ENCODE measurements at regions of chr12 and their contacts with region 1.

Region 1: GRCh38 chr12:6470375-6471163 is at the start of gene VAMP1:
- DNase-seq: peak; percentile 96
- H3K4me3 ChIP-seq: peak within 1 kb of the TSS; percentile 86
- H3K27ac ChIP-seq: peak within 1 kb of the TSS; percentile 62
- H3K4me1 ChIP-seq: peaks cover 32% of the 10 kb centered on the region
- CTCF ChIP-seq: no peak; the same call in 1 of the 2 replicates
- total RNA-seq, gene VAMP1: 82.7 and 86.0 TPM in 2 replicates

Region 2: DNA sequence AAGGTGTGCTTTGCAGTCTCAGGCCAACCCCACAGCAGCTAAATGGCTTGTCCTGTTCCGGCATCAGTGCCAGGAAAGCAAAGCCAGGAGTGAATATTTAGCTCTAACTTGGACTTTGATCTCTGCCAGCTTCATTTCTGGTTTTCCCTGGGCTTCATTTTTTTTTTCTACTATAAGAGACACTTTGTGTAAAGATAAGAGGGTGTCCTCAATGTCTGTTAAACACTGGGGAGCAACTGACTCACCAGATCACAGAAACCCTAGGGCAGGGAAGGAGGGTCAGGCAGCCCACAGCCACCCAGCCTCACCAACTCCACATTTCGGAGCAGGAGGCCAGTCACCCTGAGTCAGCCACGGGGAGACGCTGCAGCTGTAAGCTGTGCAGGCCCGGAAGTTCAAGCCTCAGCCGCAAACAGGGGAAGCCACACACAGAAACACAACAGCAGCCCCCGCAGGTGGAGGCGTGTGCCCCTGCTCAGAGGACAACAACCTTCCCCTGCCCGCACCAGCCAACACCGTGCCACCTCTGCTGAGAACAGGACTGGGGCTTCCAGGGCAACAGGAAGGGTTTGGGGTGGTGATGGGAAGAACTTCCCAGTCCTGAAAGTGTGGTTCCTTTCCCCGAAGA is 135.0 kb before region 1 on chr12:
- CTCF ChIA-PET with region 1: interaction called, 4 read pairs
- POLR2A ChIA-PET with region 1: interaction called, 3 read pairs
- intact Hi-C with region 1: loop called (anchors 5 kb)
- DNase-seq: peak; percentile 90
- H3K4me3 ChIP-seq: peak overlapping the region; percentile 53
- H3K27ac ChIP-seq: peak overlapping the region; percentile 80
- H3K4me1 ChIP-seq: peaks cover 72% of the 10 kb centered on the region
- CTCF ChIP-seq: peak; percentile 89

Region 3: GRCh38 chr12:6430124-6430989 is 40.2 kb before region 1 on chr12:
- CTCF ChIA-PET with region 1: interaction called, 34 read pairs
- POLR2A ChIA-PET with region 1: interaction called, 27 read pairs
- intact Hi-C with region 1: loop called (anchors 1 kb)
- DNase-seq: peak; percentile 41
- H3K4me3 ChIP-seq: peak overlapping the region; percentile 6
- H3K27ac ChIP-seq: peak overlapping the region; percentile 68
- H3K4me1 ChIP-seq: peaks cover 90% of the 10 kb centered on the region
- CTCF ChIP-seq: no peak

Region 4: GRCh38 chr12:6451348-6452244 is 19.0 kb before region 1 on chr12 and contains the start of gene TAPBPL:
- CTCF ChIA-PET with region 1: no interaction called
- POLR2A ChIA-PET with region 1: interaction called, 18 read pairs
- intact Hi-C with region 1: no loop called
- DNase-seq: peak; percentile 89
- H3K4me3 ChIP-seq: peak within 1 kb of the TSS; percentile 74
- H3K27ac ChIP-seq: peak within 1 kb of the TSS; percentile 81
- H3K4me1 ChIP-seq: peaks cover 56% of the 10 kb centered on the region
- CTCF ChIP-seq: no peak
- total RNA-seq, gene TAPBPL: 18.4 and 23.7 TPM in 2 replicates

Region 5: GRCh38 chr12:6533923-6534694 is 63.5 kb after region 1 on chr12 and contains the start of gene GAPDH:
- CTCF ChIA-PET with region 1: no interaction called
- POLR2A ChIA-PET with region 1: interaction called, 7 read pairs
- intact Hi-C with region 1: loop called (anchors 2 kb)
- DNase-seq: peak; percentile 99
- H3K4me3 ChIP-seq: peak within 1 kb of the TSS; percentile 93
- H3K27ac ChIP-seq: peak within 1 kb of the TSS; percentile 95
- H3K4me1 ChIP-seq: peaks cover 47% of the 10 kb centered on the region
- CTCF ChIP-seq: no peak
- total RNA-seq, gene GAPDH: 3,369 and 3,801 TPM in 2 replicates

Measured in OCI-LY7 (cell line).